Lower lobe of right lung (tissue), 2 donors: ENCODE measurements at regions of chr1 and their contacts with region 1.

Region 1: GRCh38 chr1:167059045-167059808 is 30.9 kb downstream of the GPA33 start:
- DNase-seq: peak; percentile 68
- ATAC-seq: peak; percentile 80 to 81
- H3K4me3 ChIP-seq: peak overlapping the region; percentile 14
- H3K27ac ChIP-seq: no peak overlapping the region
- H3K4me1 ChIP-seq: peaks cover 6% of the 10 kb centered on the region
- H3K27me3 ChIP-seq: no peaks in the 10 kb centered on the region
- CTCF ChIP-seq: peak; percentile 94

Region 2: DNA sequence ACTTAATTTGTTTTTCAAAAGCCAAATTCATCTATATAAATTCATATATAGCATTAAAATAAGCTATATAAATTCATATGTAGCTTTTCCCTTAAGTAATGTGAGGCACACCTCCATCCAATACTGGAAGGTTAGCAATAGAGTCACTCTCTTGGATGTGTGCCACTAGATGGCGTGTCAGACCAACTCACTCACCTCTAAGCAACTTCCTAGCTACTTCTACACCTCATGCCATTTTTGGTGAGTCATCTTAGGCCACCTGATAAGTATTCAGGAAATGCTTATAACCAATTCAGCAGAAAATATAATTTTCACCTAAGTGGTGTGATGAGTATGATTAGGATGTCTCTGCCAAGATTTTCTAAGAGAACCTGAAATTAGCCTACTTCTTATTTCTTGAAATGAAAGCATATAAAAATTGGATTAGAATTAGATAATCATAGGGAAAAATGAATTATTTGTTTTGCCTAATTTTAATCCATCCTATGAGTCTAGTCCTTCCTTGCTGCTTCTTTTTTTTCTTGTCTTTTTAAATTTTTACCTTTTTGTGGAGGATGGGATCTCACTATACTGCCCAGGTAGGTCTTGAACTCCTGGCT is 148.7 kb before region 1 on chr1:
- intact Hi-C with region 1: loop called (anchors 5 kb)
- DNase-seq: peak; percentile 58
- ATAC-seq: peak; percentile 95 to 97
- H3K4me3 ChIP-seq: no peak overlapping the region
- H3K27ac ChIP-seq: no peak overlapping the region
- H3K4me1 ChIP-seq: no peaks in the 10 kb centered on the region
- H3K27me3 ChIP-seq: no peaks in the 10 kb centered on the region
- CTCF ChIP-seq: peak; percentile 78